Activated CD8-positive, alpha-beta memory T cell treated with anti-CD3 and anti-CD28 coated beads, Interleukin-2, amount 10 ng/mL, durations not matched to agents 7 days and 5 days (primary cell): ENCODE measurements at regions of chr6 and their contacts with region 1.

Region 1: DNA sequence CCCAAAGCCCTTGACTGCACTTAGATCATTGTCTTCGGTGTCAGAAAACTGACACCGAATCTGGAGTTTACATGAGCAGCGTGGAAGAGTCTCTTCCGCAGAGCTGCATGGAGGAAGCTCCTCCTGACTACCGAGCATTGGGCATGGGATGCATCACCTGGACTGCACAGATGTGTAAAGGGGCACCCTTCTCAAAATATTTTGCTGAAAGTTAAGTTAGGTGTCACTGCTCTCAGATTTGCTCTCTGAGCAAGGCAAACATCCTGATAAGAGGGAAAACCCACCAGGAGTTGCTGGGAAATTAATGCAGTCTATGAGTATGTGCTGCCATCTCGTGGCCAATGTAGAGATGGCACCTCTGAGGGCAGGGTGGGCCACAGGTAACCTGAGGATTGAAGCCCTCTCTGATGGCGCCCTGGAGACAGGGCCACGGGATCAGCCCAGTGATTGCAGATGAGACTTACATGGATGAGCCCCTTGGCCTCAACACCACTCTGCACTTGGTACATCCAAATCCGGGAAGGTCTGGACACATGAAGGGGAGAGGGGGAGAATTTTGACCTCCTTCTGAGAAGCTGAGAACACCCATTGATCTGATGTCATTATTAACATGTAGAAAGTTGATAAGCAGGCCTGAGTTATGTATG is 129.9 kb downstream of the LPA start:
- DNase-seq: peak; percentile 66
- ATAC-seq: peak; percentile 79
- H3K4me3 Mint-ChIP-seq: no peak overlapping the region
- H3K27ac Mint-ChIP-seq: no peak overlapping the region
- H3K4me1 Mint-ChIP-seq: no peaks in the 10 kb centered on the region
- H3K27me3 Mint-ChIP-seq: peaks cover 11% of the 10 kb centered on the region

Region 2: DNA sequence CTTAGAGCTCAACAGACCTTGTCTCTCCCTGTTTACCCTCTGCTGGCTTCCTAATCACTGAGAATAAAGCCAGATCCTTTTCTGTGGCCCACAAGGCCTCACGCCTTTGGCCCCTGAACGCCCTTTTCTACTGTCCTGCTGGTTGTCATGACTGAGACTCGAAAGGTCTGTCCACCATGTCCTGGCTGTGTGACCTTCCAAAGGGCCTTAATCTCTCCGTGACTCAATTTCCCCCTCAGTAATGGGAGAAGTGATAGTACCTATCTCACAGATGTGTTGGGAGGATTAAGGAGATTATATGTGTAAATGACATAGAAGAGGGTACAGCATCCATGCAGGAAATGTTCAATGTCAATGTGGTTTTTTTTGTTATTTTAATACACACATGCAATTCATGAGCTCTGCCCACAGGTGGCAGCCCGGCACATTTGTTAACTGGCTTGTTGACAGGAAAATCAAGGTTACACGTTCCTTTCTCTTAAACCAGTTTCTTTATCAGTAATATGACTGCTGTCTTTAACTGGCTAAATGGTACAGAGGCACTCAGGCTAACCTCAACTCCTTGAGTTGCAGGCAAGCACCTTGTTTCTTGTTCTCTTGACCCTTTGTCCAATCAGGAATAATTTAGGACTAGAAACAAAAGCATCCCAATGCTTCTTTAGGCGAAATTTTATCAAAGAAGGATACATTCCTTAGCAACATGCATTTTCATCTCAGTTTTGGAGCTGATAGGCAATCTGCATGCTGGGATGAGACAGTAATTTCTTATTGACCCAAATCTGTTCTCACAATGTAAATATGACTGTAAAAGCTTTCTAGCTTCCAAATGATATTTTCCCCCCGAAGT is 396.0 kb before region 1 on chr6:
- CTCF ChIA-PET with region 1: interaction called, 28 read pairs
- DNase-seq: peak; percentile 80
- ATAC-seq: peak; percentile 79
- H3K4me3 Mint-ChIP-seq: no peak overlapping the region
- H3K27ac Mint-ChIP-seq: no peak overlapping the region
- H3K4me1 Mint-ChIP-seq: peaks cover 11% of the 10 kb centered on the region
- H3K27me3 Mint-ChIP-seq: no peaks in the 10 kb centered on the region

Region 3: GRCh38 chr6:160455541-160456213 is 78.5 kb before region 1 on chr6:
- CTCF ChIA-PET with region 1: interaction called, 18 read pairs
- DNase-seq: peak; percentile 78
- ATAC-seq: peak; percentile 90
- H3K4me3 Mint-ChIP-seq: no peak overlapping the region
- H3K27ac Mint-ChIP-seq: no peak overlapping the region
- H3K4me1 Mint-ChIP-seq: peaks cover 20% of the 10 kb centered on the region
- H3K27me3 Mint-ChIP-seq: peaks cover 6% of the 10 kb centered on the region

Region 4: GRCh38 chr6:160692364-160692959 is 158.3 kb after region 1 on chr6:
- CTCF ChIA-PET with region 1: no interaction called
- DNase-seq: no peak
- ATAC-seq: no peak
- H3K4me3 Mint-ChIP-seq: no peak overlapping the region
- H3K27ac Mint-ChIP-seq: no peak overlapping the region
- H3K4me1 Mint-ChIP-seq: no peaks in the 10 kb centered on the region
- H3K27me3 Mint-ChIP-seq: no peaks in the 10 kb centered on the region